ENCODE measurements at regions of chr1 and their contacts with region 1.

Region 1: GRCh38 chr1:154974063-154974807 is at the start of gene CKS1B:
- DNase-seq: peak; percentile 100
- ATAC-seq: peak; percentile 73
- H3K4me3 ChIP-seq: peak within 1 kb of the TSS; percentile 80
- H3K27ac ChIP-seq: peak within 1 kb of the TSS; percentile 96
- H3K4me1 ChIP-seq: peaks cover 55% of the 10 kb centered on the region
- H3K27me3 ChIP-seq: no peaks in the 10 kb centered on the region
- CTCF ChIP-seq: no peak
- total RNA-seq, gene CKS1B: 330 and 390 TPM in 2 replicates

Region 2: GRCh38 chr1:154747740-154748404 is 226.4 kb before region 1 on chr1:
- CTCF ChIA-PET with region 1: no interaction called
- POLR2A ChIA-PET with region 1: no interaction called
- intact Hi-C with region 1: no loop called
- DNase-seq: no peak
- ATAC-seq: no peak
- H3K4me3 ChIP-seq: no peak overlapping the region
- H3K27ac ChIP-seq: no peak overlapping the region
- H3K4me1 ChIP-seq: no peaks in the 10 kb centered on the region
- H3K27me3 ChIP-seq: peaks cover 84% of the 10 kb centered on the region
- CTCF ChIP-seq: no peak

Region 3: DNA sequence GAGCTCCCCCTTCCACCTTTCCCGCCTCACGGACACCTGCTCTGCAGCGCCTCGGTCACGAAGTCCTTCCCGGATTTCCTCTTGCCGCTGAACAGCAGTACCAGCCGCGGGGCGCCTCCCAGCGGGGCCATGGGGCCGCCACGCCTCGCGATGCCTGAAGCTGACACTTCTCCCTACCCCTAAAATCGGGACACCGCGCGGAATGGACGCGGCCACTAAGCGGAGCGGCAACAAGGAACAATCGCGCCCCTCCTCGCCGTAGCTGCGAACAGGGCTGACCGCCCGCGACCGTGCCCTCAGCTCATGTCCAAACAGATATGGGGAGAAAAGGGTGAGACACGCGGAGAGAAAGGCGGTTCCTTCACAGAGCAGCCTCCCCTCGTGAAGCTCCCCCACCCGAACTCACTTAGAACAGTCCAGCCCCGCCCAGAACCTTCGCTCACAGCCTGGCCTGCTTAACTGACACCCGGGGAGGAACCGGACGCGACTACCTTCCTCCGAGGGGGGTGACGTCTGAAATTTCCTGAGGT is 37.6 kb before region 1 on chr1 and contains the start of gene PMVK:
- CTCF ChIA-PET with region 1: interaction called, 3 read pairs
- POLR2A ChIA-PET with region 1: interaction called, 4 read pairs
- intact Hi-C with region 1: loop called (anchors 1 kb)
- DNase-seq: peak; percentile 94
- ATAC-seq: peak; percentile 72
- H3K4me3 ChIP-seq: peak within 1 kb of the TSS; percentile 67
- H3K27ac ChIP-seq: peak within 1 kb of the TSS; percentile 93
- H3K4me1 ChIP-seq: peaks cover 45% of the 10 kb centered on the region
- H3K27me3 ChIP-seq: no peaks in the 10 kb centered on the region
- CTCF ChIP-seq: peak; percentile 53
- total RNA-seq, gene PMVK: 32.3 and 41.5 TPM in 2 replicates

Region 4: DNA sequence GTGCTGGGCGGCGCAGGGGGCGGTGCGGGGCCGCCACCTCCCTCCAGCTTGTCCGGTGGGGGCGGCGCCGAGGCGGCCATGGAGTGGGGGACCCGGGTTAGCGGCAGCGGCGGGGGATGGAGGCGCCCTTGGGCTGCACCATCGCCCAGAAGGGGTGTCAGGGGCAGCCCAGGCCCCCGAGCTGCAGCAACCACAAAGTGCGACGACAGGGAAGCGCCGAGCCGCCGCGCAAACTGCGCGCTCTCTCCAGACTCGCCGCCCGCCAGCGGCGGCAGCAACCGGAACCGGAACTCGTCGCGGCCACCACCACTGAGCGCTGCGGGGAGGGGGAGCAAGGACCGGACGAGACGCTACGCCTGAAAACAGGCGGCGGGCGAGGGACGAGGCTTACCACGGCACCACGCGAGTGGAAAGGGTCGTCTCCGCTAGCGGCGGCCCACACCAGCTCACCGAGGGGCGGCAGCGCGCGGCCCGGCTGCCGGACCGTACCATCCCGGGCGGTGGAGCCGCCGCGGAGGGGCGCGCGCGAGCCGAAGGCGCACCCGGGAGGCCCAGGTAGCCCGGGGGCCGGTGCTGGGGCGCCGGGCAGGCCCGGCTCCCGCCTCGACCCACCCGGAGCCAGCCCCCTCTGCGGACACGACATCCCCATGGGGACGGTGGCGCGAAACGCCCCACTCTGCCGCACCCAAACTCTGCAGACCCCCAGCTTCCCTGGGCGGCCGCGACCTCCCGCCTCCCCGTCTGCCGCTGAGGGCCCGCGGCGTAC is 12.6 kb before region 1 on chr1 and contains the start of gene PYGO2:
- CTCF ChIA-PET with region 1: no interaction called
- POLR2A ChIA-PET with region 1: interaction called, 4 read pairs
- intact Hi-C with region 1: loop called (anchors 1 kb)
- DNase-seq: peak; percentile 80
- ATAC-seq: peak; percentile 82
- H3K4me3 ChIP-seq: peak within 1 kb of the TSS; percentile 71
- H3K27ac ChIP-seq: peak within 1 kb of the TSS; percentile 83
- H3K4me1 ChIP-seq: peaks cover 19% of the 10 kb centered on the region
- H3K27me3 ChIP-seq: no peaks in the 10 kb centered on the region
- CTCF ChIP-seq: peak; percentile 78
- total RNA-seq, gene PYGO2: 41.7 and 43.3 TPM in 2 replicates

Region 5: GRCh38 chr1:155017041-155017945 is 43.1 kb after region 1 on chr1:
- CTCF ChIA-PET with region 1: interaction called, 9 read pairs
- POLR2A ChIA-PET with region 1: interaction called, 3 read pairs
- intact Hi-C with region 1: loop called (anchors 1 kb)
- DNase-seq: peak; percentile 99
- ATAC-seq: peak; percentile 89
- H3K4me3 ChIP-seq: peak overlapping the region; percentile 42
- H3K27ac ChIP-seq: peak overlapping the region; percentile 87
- H3K4me1 ChIP-seq: peaks cover 21% of the 10 kb centered on the region
- H3K27me3 ChIP-seq: no peaks in the 10 kb centered on the region
- CTCF ChIP-seq: peak; percentile 100

Region 6: DNA sequence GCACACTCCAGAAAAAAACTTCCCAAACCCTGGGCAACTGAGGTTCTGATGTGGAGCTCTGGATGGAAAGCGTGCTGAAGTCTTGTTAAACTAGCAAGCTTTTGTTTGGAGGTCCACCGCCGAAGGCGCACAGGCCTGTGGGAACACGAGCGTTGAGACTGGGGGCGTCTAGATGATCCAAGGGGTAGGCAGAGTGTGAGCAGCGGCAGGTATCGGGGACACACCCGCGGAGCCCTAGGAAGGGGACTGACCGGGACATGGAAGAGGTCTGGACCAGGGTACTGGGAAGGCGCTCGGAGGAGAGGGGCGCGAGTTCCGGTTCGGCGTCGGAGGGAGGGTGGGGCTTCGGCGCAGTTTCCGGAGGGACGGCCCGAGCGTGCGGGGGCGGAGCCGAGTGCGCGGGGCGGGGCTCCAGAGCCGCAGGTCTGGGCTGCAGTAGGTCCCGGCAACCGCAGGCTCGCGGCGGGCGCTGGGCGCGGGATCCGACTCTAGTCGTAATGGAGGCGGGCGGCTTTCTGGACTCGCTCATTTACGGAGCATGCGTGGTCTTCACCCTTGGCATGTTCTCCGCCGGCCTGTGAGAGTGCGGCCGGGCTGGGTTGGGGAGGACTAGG is 161.3 kb after region 1 on chr1 and contains the start of gene SLC50A1:
- CTCF ChIA-PET with region 1: no interaction called
- POLR2A ChIA-PET with region 1: interaction called, 4 read pairs
- intact Hi-C with region 1: loop called (anchors 5 kb)
- DNase-seq: peak; percentile 97
- ATAC-seq: peak; percentile 73
- H3K4me3 ChIP-seq: peak within 1 kb of the TSS; percentile 87
- H3K27ac ChIP-seq: peak within 1 kb of the TSS; percentile 94
- H3K4me1 ChIP-seq: peaks cover 54% of the 10 kb centered on the region
- H3K27me3 ChIP-seq: no peaks in the 10 kb centered on the region
- CTCF ChIP-seq: no peak
- total RNA-seq, gene SLC50A1: 59.2 and 75.2 TPM in 2 replicates